Activated CD4-positive, alpha-beta T cell treated with anti-CD3 and anti-CD28 coated beads for 36 hours (primary cell): ENCODE measurements at regions of chr16 and their contacts with region 1.

Region 1: GRCh38 chr16:69761983-69762813 is at the start of gene WWP2:
- DNase-seq: peak; percentile 86
- ATAC-seq: peak; percentile 76
- H3K4me3 Mint-ChIP-seq: peak within 1 kb of the TSS; percentile 91
- H3K27ac Mint-ChIP-seq: peak within 1 kb of the TSS; percentile 98
- H3K4me1 Mint-ChIP-seq: peaks cover 35% of the 10 kb centered on the region
- H3K27me3 Mint-ChIP-seq: no peaks in the 10 kb centered on the region
- total RNA-seq, gene WWP2: 43.3 to 44.6 TPM

Region 2: GRCh38 chr16:69330286-69331109 is 431.7 kb before region 1 on chr16 and contains the start of gene PDF:
- CTCF ChIA-PET with region 1: no interaction called
- POLR2A ChIA-PET with region 1: no interaction called
- intact Hi-C with region 1: loop called in 1 of 2 experiments (anchors 1 kb)
- DNase-seq: peak; percentile 90
- ATAC-seq: peak; percentile 94
- H3K4me3 Mint-ChIP-seq: peak within 1 kb of the TSS; percentile 83
- H3K27ac Mint-ChIP-seq: peak within 1 kb of the TSS; percentile 84
- H3K4me1 Mint-ChIP-seq: peaks cover 45% of the 10 kb centered on the region
- H3K27me3 Mint-ChIP-seq: no peaks in the 10 kb centered on the region
- total RNA-seq, gene PDF: 10.1 to 19.9 TPM

Region 3: DNA sequence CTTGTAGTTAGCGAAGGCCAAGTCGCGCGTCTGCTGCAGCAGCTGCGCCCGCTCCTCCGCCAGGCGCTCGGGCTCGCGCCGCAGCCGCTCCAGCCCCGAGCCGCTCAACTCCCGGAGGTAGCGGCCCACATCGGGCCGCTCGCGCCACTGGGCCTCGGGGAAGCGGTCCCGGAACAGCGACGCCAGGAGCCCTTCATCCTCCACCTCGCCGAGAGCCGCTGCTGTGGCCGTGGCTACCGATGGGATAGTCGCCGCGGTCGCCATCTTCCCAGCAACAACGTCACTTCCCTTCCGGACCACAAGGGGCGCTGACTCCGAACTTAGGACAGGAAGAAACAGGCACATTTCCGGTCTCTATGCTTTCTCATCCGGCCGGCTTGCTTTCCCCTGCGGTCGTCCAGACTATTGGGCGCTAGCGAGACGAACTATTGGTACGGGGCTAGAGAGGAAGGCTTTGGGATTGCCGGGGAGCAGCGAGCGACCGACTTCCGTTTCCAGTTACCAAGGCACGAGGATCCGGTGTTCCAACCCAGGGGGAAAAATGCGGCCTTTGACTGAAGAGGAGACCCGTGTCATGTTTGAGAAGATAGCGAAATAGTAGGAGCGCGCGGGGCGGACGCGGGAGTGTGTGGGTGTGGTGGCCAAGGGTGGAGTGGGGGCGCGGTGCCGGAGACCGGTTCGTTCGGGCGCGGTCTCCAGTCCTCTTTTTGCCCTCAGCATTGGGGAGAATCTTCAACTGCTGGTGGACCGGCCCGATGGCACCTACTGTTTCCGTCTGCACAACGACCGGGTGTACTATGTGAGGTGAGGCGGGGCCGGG is 422.7 kb before region 1 on chr16 and contains the starts of genes COG8 and NIP7:
- CTCF ChIA-PET with region 1: no interaction called
- POLR2A ChIA-PET with region 1: no interaction called
- intact Hi-C with region 1: loop called in 1 of 2 experiments (anchors 2 kb)
- DNase-seq: peak; percentile 95
- ATAC-seq: peak; percentile 89
- H3K4me3 Mint-ChIP-seq: peak within 1 kb of the TSS; percentile 96
- H3K27ac Mint-ChIP-seq: peak within 1 kb of the TSS; percentile 98
- H3K4me1 Mint-ChIP-seq: peaks cover 37% of the 10 kb centered on the region
- H3K27me3 Mint-ChIP-seq: no peaks in the 10 kb centered on the region
- total RNA-seq, gene COG8: 30.0 to 30.3 TPM
- total RNA-seq, gene NIP7: 39.1 to 41.3 TPM

Region 4: DNA sequence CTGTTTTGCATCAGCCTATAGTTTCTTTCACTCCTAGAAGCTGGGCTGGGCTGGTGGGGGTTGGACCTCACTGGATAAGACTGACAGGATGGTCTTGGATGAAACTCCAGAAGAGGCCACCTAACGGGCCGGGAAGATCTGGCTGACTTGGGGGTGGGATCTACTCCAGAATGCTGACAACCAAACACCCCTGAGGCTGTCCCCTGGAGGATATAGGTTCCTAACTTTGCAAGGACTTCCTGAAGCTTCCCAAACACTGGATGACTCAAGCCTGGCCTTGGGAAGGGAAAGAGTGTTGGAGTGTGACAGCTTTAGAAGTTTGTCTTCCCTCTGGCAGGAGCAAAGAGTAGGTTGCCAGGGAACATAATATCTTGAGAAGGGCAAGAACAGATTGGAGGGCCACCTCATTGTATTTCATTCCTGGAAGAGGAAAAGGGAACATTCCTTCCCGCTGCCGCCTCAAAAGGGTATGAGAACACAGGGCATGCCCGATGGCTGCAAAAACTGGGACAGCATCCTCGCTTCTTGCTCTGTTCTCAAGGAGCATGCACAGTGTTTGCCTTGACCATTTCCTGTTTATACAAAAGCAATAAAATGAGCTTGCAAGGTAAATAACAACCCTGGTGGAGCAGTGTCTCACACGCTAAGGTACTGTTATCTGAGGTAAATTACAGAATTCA is 344.5 kb before region 1 on chr16:
- CTCF ChIA-PET with region 1: no interaction called
- POLR2A ChIA-PET with region 1: no interaction called
- intact Hi-C with region 1: no loop called
- DNase-seq: no peak
- ATAC-seq: no peak
- H3K4me3 Mint-ChIP-seq: no peak overlapping the region
- H3K27ac Mint-ChIP-seq: no peak overlapping the region
- H3K4me1 Mint-ChIP-seq: peaks cover 3% of the 10 kb centered on the region
- H3K27me3 Mint-ChIP-seq: no peaks in the 10 kb centered on the region

Region 5: GRCh38 chr16:69660166-69660565 is 102.0 kb before region 1 on chr16:
- CTCF ChIA-PET with region 1: no interaction called
- POLR2A ChIA-PET with region 1: no interaction called
- intact Hi-C with region 1: no loop called
- DNase-seq: no peak
- ATAC-seq: no peak
- H3K4me3 Mint-ChIP-seq: no peak overlapping the region
- H3K27ac Mint-ChIP-seq: no peak overlapping the region
- H3K4me1 Mint-ChIP-seq: no peaks in the 10 kb centered on the region
- H3K27me3 Mint-ChIP-seq: no peaks in the 10 kb centered on the region

Region 6: DNA sequence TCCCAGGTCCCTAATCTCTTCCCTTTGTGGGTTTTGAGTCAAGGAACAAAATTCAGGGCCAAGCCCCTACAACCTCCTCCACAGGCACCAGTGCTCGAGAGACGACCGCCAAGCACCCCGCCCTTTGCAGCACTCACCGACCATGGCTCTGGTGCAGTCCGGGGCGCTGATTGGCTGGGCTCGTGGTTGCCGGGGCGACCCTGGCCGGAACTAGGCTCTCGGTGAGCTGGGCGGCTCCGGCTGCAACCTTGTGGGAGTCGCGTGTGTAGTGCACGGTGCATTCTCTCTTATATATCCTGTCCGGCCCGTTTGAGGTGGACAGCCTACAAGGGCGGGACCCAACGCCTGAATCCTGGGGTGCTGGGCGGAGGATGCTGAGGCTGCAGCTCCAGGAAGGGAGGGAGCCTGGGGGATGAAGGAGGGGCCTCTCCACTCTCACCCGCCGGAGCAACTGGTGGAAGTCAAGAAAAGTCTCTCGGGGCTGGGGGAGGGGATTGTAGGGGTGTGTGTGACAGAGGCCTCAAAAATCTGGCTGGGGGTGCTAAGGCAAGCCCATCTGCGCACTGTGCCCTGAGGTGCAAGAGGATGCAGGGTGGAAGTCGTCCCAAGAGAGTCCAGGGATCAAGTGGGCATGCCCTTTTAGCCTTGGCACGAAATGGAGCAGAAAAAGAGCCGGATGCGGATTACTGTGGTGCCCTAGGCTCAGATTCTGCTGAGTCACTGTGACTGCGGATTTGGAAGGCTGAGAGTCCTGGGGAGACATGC is 35.7 kb before region 1 on chr16 and contains the start of gene NQO1:
- CTCF ChIA-PET with region 1: interaction called, 3 read pairs
- POLR2A ChIA-PET with region 1: interaction called, 4 read pairs
- intact Hi-C with region 1: loop called in 1 of 2 experiments (anchors 1 kb)
- DNase-seq: peak; percentile 95
- ATAC-seq: peak; percentile 99
- H3K4me3 Mint-ChIP-seq: peak within 1 kb of the TSS; percentile 79
- H3K27ac Mint-ChIP-seq: peak within 1 kb of the TSS; percentile 89
- H3K4me1 Mint-ChIP-seq: peaks cover 24% of the 10 kb centered on the region
- H3K27me3 Mint-ChIP-seq: no peaks in the 10 kb centered on the region
- total RNA-seq, gene NQO1: 9.9 to 11.4 TPM